ENCODE measurements at regions of chr20 and their contacts with region 1.

Region 1: GRCh38 chr20:22333885-22334545 is 250.4 kb downstream of the FOXA2 start:
- DNase-seq: peak; percentile 40 to 71
- H3K4me3 ChIP-seq: no peak overlapping the region
- H3K4me1 ChIP-seq: no peaks in the 10 kb centered on the region
- H3K27me3 ChIP-seq: no peaks in the 10 kb centered on the region

Region 2: GRCh38 chr20:22684072-22684762 is 350.2 kb after region 1 on chr20:
- in situ Hi-C with region 1: loop called (anchors 10 kb)
- DNase-seq: peak; percentile 32 to 56
- H3K4me3 ChIP-seq: no peak overlapping the region
- H3K4me1 ChIP-seq: no peaks in the 10 kb centered on the region
- H3K27me3 ChIP-seq: no peaks in the 10 kb centered on the region

Region 3: GRCh38 chr20:23331450-23332350 is 997.7 kb after region 1 on chr20:
- in situ Hi-C with region 1: loop called (anchors 10 kb)
- DNase-seq: no peak
- H3K4me3 ChIP-seq: no peak overlapping the region
- H3K4me1 ChIP-seq: no peaks in the 10 kb centered on the region
- H3K27me3 ChIP-seq: no peaks in the 10 kb centered on the region

Measured in HAP-1 (cell line).